ENCODE measurements at regions of chr16 and their contacts with region 1.

Region 1: DNA sequence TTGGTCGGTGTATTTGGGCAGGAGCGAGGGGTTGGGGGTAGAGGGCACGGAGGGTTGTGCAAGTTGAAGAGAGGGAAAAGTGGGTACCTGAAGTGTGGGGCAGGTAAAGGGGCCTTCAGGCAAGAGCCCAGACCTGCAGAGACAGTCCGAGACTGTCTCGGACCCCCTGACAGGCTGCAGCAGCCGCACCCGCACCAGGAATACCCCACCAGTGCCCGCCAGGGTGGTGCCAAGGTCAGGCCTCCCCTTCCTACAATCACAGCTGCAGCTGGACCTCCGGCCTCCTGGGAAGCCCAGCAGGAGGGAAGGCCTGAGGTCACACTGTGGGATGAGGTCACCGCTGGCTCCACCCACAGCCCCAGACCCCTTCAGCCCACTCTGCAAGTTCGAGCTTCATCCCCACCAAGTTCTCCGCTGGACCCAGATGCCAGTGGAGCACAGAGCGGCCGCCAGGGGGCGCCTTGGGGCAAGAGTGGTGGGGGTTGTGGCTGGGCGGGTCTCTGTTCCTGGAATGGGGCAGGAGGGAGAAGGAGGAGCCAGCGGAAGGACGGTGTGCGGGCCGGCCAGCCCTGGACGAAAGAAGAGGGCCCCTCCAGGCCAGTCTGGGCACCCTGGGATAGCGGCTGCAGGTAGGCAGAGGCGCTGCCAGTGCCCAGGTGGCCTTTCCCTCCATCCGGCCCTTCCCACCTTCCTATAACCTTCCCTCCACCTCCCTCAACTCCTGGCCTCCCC is at the start of gene HSD3B7:
- DNase-seq: peak; percentile 92
- ATAC-seq: peak; percentile 89 to 95
- total RNA-seq, gene HSD3B7: 9.8 to 10.0 TPM

Region 2: GRCh38 chr16:31094424-31095120 is 109.7 kb after region 1 on chr16 and contains the start of gene VKORC1:
- intact Hi-C with region 1: loop called in 1 of 2 experiments (anchors 10 kb)
- DNase-seq: peak; percentile 95
- ATAC-seq: peak; percentile 96
- total RNA-seq, gene VKORC1: 47.1 to 53.2 TPM

Region 3: GRCh38 chr16:31142109-31143010 is 157.5 kb after region 1 on chr16:
- intact Hi-C with region 1: loop called in 1 of 2 experiments (anchors 5 kb)
- DNase-seq: peak; percentile 99
- ATAC-seq: peak; percentile 97 to 98

Region 4: GRCh38 chr16:31440516-31441184 is 455.8 kb after region 1 on chr16:
- intact Hi-C with region 1: loop called (anchors 5 to 10 kb)
- DNase-seq: no peak
- ATAC-seq: no peak

Region 5: DNA sequence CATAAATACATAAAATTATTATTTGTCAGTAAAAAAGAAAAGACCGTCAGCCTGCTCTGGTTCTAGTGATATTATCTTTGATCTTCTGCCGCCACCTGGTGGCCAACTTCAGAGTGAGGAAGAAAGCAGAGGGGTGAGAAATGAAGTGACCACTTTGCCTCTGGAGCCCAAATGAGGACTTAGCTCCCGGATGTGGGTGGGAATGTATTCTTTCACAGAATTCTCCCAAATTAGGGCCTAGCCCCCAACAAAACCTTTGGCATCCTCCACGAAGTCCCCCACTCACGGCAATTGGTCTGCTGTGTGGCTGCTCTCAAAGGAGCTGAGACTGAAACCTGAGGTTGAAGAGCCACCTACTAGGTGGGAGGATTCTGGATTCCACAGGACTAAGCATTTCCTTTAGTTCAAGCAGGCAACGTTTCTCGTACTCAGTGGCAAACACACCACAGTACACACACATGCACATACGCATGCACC is 883.9 kb after region 1 on chr16:
- intact Hi-C with region 1: loop called in 1 of 2 experiments (anchors 10 kb)
- DNase-seq: peak; percentile 84
- ATAC-seq: peak; percentile 63 to 71